Caco-2 (cell line): ENCODE measurements at regions of chr11 and their contacts with region 1.

Region 1: DNA sequence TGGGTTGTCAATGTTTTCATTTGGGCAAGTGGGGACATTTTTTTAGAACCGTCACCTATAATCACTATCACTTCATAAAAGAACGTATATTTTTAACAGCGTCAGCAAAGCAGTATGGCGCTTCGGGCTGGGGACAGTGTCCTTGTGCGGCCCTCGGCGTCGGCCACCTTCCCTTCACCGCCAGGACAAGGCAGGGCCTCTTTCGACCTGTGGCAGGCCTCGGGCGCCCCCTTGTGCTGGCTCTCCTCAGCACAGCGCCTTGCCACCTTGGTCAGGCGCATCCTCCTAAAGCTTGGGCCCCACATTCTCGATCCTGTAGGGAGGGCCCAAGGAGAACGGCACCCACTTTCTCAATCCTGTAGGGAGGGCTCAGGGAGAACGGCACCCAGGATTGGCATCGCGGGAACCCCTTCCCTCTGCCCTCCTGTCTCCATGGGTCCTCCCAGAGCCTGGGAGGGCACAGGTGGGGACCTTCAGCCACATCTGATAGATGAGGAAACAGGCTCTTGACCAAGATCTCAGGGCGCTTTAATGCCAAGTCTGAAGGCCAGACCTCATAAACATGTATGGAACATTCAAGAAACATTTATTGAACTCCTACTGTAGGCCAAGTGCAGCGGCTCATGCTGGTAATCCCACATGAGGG is 11.5 kb upstream of the FADD start:
- DNase-seq: peak; percentile 82 to 89
- H3K4me3 ChIP-seq: no peak overlapping the region
- H3K4me3 Mint-ChIP-seq: no peak overlapping the region
- H3K27ac Mint-ChIP-seq: no peak overlapping the region
- H3K4me1 ChIP-seq: no peaks in the 10 kb centered on the region
- H3K4me1 Mint-ChIP-seq: no peaks in the 10 kb centered on the region
- H3K27me3 ChIP-seq: no peaks in the 10 kb centered on the region
- H3K27me3 Mint-ChIP-seq: no peaks in the 10 kb centered on the region
- CTCF ChIP-seq: peak; percentile 93 to 96

Region 2: DNA sequence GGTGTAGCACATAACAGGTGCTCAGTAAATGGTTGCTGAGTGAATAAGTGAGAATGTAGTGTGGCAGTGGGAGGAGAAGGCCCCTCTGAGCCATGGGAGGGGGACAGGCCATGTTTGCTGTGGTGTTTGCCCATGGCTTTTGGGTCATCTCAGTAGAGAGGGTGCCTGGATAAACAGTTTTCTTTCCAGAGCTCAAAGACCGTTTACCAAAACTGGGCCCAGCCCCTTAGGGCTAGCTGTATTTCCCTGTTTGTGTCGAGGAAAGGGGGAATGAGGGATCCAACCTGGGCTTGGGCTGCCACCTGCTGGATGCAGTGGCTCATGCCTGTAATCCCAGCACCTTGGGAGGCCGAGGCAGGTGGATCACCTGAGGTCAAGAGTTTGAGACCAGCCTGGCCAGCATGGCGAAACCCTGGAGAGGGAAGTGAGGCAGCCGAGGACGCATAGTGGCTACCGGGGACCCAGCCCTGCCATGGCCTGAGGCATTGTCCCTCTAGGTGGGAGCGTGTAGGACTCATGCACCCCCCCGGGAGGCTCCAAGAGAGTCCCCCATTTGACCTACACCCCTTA is 507.8 kb before region 1 on chr11:
- CTCF ChIA-PET with region 1: no interaction called
- POLR2A ChIA-PET with region 1: no interaction called
- intact Hi-C with region 1: loop called (anchors 5 kb)
- DNase-seq: peak; percentile 77 to 79
- H3K4me3 ChIP-seq: no peak overlapping the region
- H3K4me3 Mint-ChIP-seq: no peak overlapping the region
- H3K27ac Mint-ChIP-seq: no peak overlapping the region
- H3K4me1 ChIP-seq: peaks cover 10% of the 10 kb centered on the region
- H3K4me1 Mint-ChIP-seq: peaks cover 10% of the 10 kb centered on the region
- H3K27me3 ChIP-seq: no peaks in the 10 kb centered on the region
- H3K27me3 Mint-ChIP-seq: no peaks in the 10 kb centered on the region
- CTCF ChIP-seq: peak; percentile 60 to 76

Region 3: GRCh38 chr11:69909561-69910496 is 281.8 kb before region 1 on chr11:
- CTCF ChIA-PET with region 1: interaction called, 23 read pairs
- POLR2A ChIA-PET with region 1: no interaction called
- intact Hi-C with region 1: loop called (anchors 1 kb)
- DNase-seq: peak; percentile 51 to 57
- H3K4me3 ChIP-seq: no peak overlapping the region
- H3K4me3 Mint-ChIP-seq: no peak overlapping the region
- H3K27ac Mint-ChIP-seq: no peak overlapping the region
- H3K4me1 ChIP-seq: peaks cover 23% of the 10 kb centered on the region
- H3K4me1 Mint-ChIP-seq: peaks cover 14% of the 10 kb centered on the region
- H3K27me3 ChIP-seq: no peaks in the 10 kb centered on the region
- H3K27me3 Mint-ChIP-seq: no peaks in the 10 kb centered on the region
- CTCF ChIP-seq: peak; percentile 88 to 98

Region 4: DNA sequence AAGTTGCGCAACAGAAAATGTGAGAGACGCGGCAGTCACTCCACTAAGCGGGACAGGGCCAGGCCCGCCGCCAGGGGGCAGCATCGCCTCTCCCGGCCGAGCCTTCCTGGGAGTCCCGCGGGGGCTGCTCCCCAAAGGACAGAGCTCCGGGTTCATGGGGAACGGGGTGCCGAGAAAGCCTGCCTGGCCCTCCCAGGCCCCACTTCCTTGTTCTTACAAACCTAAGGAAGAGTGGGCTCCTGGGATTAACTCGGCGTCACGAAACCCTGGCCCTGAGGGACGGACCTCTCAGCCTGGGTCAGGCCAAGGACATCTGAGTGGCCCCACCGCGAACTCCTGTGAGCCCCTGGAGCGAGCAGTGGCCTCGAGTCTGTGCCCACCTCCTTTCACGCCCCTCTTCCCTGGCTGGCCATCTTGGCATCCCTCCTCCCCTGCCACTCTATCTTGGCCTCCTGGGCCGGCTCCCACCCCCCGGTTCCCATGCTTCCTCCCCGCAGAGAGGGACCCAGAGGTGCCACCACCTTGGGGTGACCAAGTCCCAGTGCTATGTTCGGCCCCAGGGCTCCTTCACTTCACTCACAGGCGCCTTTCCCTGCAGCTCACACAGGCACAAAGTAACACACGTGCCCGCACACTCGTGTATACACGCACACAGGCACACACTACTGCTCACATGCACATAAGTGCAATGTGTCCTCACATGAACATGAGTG is 272.5 kb before region 1 on chr11:
- CTCF ChIA-PET with region 1: interaction called, 21 read pairs
- POLR2A ChIA-PET with region 1: no interaction called
- intact Hi-C with region 1: loop called (anchors 1 kb)
- DNase-seq: peak; percentile 86 to 95
- H3K4me3 ChIP-seq: no peak overlapping the region
- H3K4me3 Mint-ChIP-seq: no peak overlapping the region
- H3K27ac Mint-ChIP-seq: peak overlapping the region; percentile 54
- H3K4me1 ChIP-seq: peaks cover 28% of the 10 kb centered on the region
- H3K4me1 Mint-ChIP-seq: peaks cover 6% of the 10 kb centered on the region
- H3K27me3 ChIP-seq: no peaks in the 10 kb centered on the region
- H3K27me3 Mint-ChIP-seq: peaks cover 10% of the 10 kb centered on the region
- CTCF ChIP-seq: peak; percentile 99

Region 5: GRCh38 chr11:69943066-69943465 is 248.6 kb before region 1 on chr11:
- CTCF ChIA-PET with region 1: interaction called, 7 read pairs
- POLR2A ChIA-PET with region 1: no interaction called
- intact Hi-C with region 1: loop called (anchors 1 kb)
- DNase-seq: peak; percentile 82 to 83
- H3K4me3 ChIP-seq: no peak overlapping the region
- H3K4me3 Mint-ChIP-seq: no peak overlapping the region
- H3K27ac Mint-ChIP-seq: peak overlapping the region; percentile 22
- H3K4me1 ChIP-seq: peaks cover 32% of the 10 kb centered on the region
- H3K4me1 Mint-ChIP-seq: peaks cover 24% of the 10 kb centered on the region
- H3K27me3 ChIP-seq: no peaks in the 10 kb centered on the region
- H3K27me3 Mint-ChIP-seq: no peaks in the 10 kb centered on the region
- CTCF ChIP-seq: peak; percentile 71 to 91

Region 6: DNA sequence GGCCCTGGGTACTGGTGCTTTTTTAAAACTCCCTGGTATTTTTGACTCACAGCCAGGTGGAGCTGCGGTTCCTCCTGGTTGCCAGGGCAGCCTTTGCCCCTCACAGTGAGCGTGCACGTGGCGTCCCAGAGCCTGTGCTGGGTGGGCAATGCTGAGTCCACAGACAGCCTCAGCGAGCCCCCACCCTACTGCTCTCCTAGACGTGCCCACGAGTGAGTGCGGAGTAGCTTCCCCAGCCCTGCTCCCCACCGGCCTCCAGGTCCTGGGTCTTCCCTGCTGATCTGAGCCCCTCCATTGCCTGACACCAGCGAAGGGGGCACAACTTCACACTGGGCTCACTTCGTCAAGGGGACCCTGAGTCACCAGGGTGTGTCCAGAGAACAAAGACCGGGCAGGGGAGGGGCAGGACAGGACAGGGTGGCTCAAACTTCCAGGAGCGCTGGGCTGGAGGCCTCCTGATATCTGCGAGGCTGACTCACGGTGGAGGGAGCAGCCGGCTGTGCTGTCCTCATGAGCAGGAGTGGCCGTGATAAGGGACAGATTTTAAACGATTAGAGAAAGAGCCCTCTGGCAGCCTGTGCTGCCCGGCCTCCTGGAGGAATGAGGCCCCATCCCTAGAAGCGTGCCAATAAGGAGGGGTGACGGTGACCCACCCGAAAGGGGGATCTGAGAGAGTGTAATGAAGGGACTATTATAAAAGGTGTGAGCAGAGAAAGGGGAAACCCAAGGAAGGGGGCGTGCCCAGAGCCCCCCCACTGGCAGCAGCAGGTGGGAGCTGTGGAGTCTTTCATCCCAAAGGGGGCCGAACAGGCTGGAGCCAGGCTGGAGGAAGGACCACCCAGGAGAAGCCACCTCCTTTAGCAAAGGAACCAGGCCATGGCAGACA is 243.1 kb before region 1 on chr11:
- CTCF ChIA-PET with region 1: interaction called, 7 read pairs
- POLR2A ChIA-PET with region 1: no interaction called
- intact Hi-C with region 1: loop called (anchors 1 kb)
- DNase-seq: peak; percentile 86 to 94
- H3K4me3 ChIP-seq: no peak overlapping the region
- H3K4me3 Mint-ChIP-seq: peak overlapping the region; percentile 47
- H3K27ac Mint-ChIP-seq: peak overlapping the region; percentile 93
- H3K4me1 ChIP-seq: peaks cover 44% of the 10 kb centered on the region
- H3K4me1 Mint-ChIP-seq: peaks cover 31% of the 10 kb centered on the region
- H3K27me3 ChIP-seq: no peaks in the 10 kb centered on the region
- H3K27me3 Mint-ChIP-seq: no peaks in the 10 kb centered on the region
- CTCF ChIP-seq: peak; percentile 53 to 62

Region 7: GRCh38 chr11:70087446-70088167 is 104.0 kb before region 1 on chr11:
- CTCF ChIA-PET with region 1: no interaction called
- POLR2A ChIA-PET with region 1: no interaction called
- intact Hi-C with region 1: loop called (anchors 5 kb)
- DNase-seq: no peak
- H3K4me3 ChIP-seq: no peak overlapping the region
- H3K4me3 Mint-ChIP-seq: no peak overlapping the region
- H3K27ac Mint-ChIP-seq: no peak overlapping the region
- H3K4me1 ChIP-seq: peaks cover 16% of the 10 kb centered on the region
- H3K4me1 Mint-ChIP-seq: peaks cover 16% of the 10 kb centered on the region
- H3K27me3 ChIP-seq: no peaks in the 10 kb centered on the region
- H3K27me3 Mint-ChIP-seq: no peaks in the 10 kb centered on the region
- CTCF ChIP-seq: no peak

Region 8: GRCh38 chr11:70226782-70227369 is 35.3 kb after region 1 on chr11:
- CTCF ChIA-PET with region 1: no interaction called
- POLR2A ChIA-PET with region 1: no interaction called
- intact Hi-C with region 1: no loop called
- DNase-seq: peak in 1 of 2 experiments; percentile 69
- H3K4me3 ChIP-seq: no peak overlapping the region
- H3K4me3 Mint-ChIP-seq: no peak overlapping the region
- H3K27ac Mint-ChIP-seq: no peak overlapping the region
- H3K4me1 ChIP-seq: peaks cover 18% of the 10 kb centered on the region
- H3K4me1 Mint-ChIP-seq: peaks cover 6% of the 10 kb centered on the region
- H3K27me3 ChIP-seq: no peaks in the 10 kb centered on the region
- H3K27me3 Mint-ChIP-seq: no peaks in the 10 kb centered on the region
- CTCF ChIP-seq: peak; percentile 45 to 67